Naive thymus-derived CD4-positive, alpha-beta T cell (primary cell): ENCODE measurements at regions of chr9 and their contacts with region 1.

Region 1: GRCh38 chr9:77177161-77177893 is at the start of gene VPS13A:
- DNase-seq: peak; percentile 78 to 92 (median 87)
- ATAC-seq: peak; percentile 92
- H3K4me3 ChIP-seq: peak within 1 kb of the TSS; percentile 89
- H3K4me3 Mint-ChIP-seq: peak within 1 kb of the TSS; percentile 90 to 98 (median 96)
- H3K27ac ChIP-seq: peak within 1 kb of the TSS; percentile 86
- H3K27ac Mint-ChIP-seq: peak within 1 kb of the TSS; percentile 76 to 96 (median 90)
- H3K4me1 ChIP-seq: peaks cover 5 to 17% of the 10 kb centered on the region in 2 donors
- H3K4me1 Mint-ChIP-seq: peaks cover 12 to 39% (median 30%) of the 10 kb centered on the region in 7 donors
- H3K27me3 ChIP-seq: no peaks in the 10 kb centered on the region
- H3K27me3 Mint-ChIP-seq: peaks cover 0 to 20% (median 0%) of the 10 kb centered on the region in 5 donors
- total RNA-seq, gene VPS13A: 37.1 to 52.8 (median 42.6) TPM

Region 2: DNA sequence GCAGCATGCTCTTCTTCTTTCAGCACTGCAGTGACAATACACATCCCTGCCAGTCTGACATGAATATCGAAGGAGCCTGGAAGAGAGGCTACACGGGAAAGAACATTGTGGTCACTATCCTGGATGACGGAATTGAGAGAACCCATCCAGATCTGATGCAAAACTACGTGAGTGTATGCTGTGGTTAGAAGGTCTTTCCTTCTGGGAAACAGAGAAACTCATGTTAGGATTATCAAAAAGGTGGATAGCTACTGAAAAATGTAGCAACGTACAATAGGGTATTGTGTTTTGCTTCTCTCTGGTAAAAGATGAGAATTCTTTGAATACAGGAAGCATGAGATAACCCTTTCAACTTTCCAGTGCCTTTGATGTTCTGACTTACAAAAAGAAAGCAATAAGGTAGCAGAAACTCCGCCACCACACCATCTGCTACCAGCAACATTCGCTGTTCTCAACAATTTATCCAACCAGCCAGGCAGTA is 1153.6 kb before region 1 on chr9:
- CTCF ChIA-PET with region 1: no interaction called
- POLR2A ChIA-PET with region 1: no interaction called
- intact Hi-C with region 1: loop called (anchors 5 kb)
- DNase-seq: peak in 7 of 9 donors; percentile 69 to 87 (median 81)
- ATAC-seq: peak; percentile 93
- H3K4me3 ChIP-seq: peak overlapping the region; percentile 38
- H3K4me3 Mint-ChIP-seq: peak overlapping the region; percentile 68 to 86 (median 80)
- H3K27ac ChIP-seq: peak overlapping the region; percentile 76
- H3K27ac Mint-ChIP-seq: peak overlapping the region; percentile 77 to 99 (median 96)
- H3K4me1 ChIP-seq: peaks cover 10 to 96% of the 10 kb centered on the region in 2 donors
- H3K4me1 Mint-ChIP-seq: peaks cover 59 to 100% (median 98%) of the 10 kb centered on the region in 7 donors
- H3K27me3 ChIP-seq: no peaks in the 10 kb centered on the region
- H3K27me3 Mint-ChIP-seq: no peaks in the 10 kb centered on the region

Region 3: DNA sequence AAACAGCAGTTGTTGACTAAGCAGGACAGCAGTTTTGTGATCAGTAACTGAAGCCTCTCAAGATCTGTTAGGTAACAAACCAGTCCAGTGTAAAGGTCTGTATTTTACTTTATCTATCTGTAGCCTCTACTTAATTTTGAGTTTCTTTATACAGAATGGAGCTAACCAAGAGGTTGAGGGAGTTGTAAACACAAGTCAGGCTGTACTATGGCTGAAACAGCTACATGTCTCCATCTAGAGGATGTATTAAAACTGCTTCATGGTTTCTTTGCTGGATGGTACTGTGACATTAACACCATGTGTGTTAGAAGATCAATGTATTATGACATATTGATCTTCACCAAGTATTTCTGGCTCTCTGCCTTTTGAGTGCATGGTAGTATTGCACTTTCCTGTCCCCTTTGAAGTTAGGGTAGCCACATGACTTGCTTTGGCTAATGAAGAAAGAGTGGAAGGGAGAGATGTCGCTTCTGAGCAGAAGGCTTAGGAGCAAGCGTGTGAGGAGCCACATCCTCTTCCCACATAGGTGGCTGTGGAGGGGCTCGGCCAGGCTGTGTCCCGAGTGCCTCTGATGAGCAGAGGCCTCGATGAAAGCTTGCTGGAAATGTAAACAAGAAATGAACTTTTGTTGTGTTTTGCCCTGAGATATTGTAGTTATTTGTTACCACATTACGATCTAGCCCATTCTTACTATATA is 518.6 kb before region 1 on chr9:
- CTCF ChIA-PET with region 1: no interaction called
- POLR2A ChIA-PET with region 1: no interaction called
- intact Hi-C with region 1: loop called in 1 of 2 experiments (anchors 10 kb)
- DNase-seq: peak in 4 of 9 donors; percentile 21 to 44 (median 25)
- ATAC-seq: peak; percentile 86
- H3K4me3 ChIP-seq: no peak overlapping the region
- H3K4me3 Mint-ChIP-seq: no peak overlapping the region
- H3K27ac ChIP-seq: no peak overlapping the region
- H3K27ac Mint-ChIP-seq: no peak overlapping the region
- H3K4me1 ChIP-seq: peaks cover 0 to 13% of the 10 kb centered on the region in 2 donors
- H3K4me1 Mint-ChIP-seq: peaks cover 0 to 52% (median 12%) of the 10 kb centered on the region in 7 donors
- H3K27me3 ChIP-seq: no peaks in the 10 kb centered on the region
- H3K27me3 Mint-ChIP-seq: peaks cover 0 to 18% (median 0%) of the 10 kb centered on the region in 5 donors

Region 4: GRCh38 chr9:77328102-77328501 is 150.8 kb after region 1 on chr9:
- CTCF ChIA-PET with region 1: no interaction called
- POLR2A ChIA-PET with region 1: no interaction called
- intact Hi-C with region 1: loop called in 1 of 2 experiments (anchors 10 kb)
- DNase-seq: no peak
- ATAC-seq: no peak
- H3K4me3 ChIP-seq: no peak overlapping the region
- H3K4me3 Mint-ChIP-seq: no peak overlapping the region
- H3K27ac ChIP-seq: no peak overlapping the region
- H3K27ac Mint-ChIP-seq: no peak overlapping the region
- H3K4me1 ChIP-seq: no peaks in the 10 kb centered on the region
- H3K4me1 Mint-ChIP-seq: peaks cover 0 to 5% (median 0%) of the 10 kb centered on the region in 7 donors
- H3K27me3 ChIP-seq: no peaks in the 10 kb centered on the region
- H3K27me3 Mint-ChIP-seq: no peaks in the 10 kb centered on the region

Region 5: GRCh38 chr9:77475641-77476473 is 298.5 kb after region 1 on chr9:
- CTCF ChIA-PET with region 1: no interaction called
- POLR2A ChIA-PET with region 1: no interaction called
- intact Hi-C with region 1: loop called in 1 of 2 experiments (anchors 1 kb)
- DNase-seq: peak in 8 of 9 donors; percentile 24 to 64 (median 48)
- ATAC-seq: peak; percentile 96
- H3K4me3 ChIP-seq: peak overlapping the region; percentile 1
- H3K4me3 Mint-ChIP-seq: peak overlapping the region; percentile 13 to 74 (median 52)
- H3K27ac ChIP-seq: peak overlapping the region; percentile 64
- H3K27ac Mint-ChIP-seq: peak overlapping the region; percentile 90 to 97 (median 95)
- H3K4me1 ChIP-seq: peaks cover 0 to 19% of the 10 kb centered on the region in 2 donors
- H3K4me1 Mint-ChIP-seq: peaks cover 7 to 37% (median 29%) of the 10 kb centered on the region in 7 donors
- H3K27me3 ChIP-seq: no peaks in the 10 kb centered on the region
- H3K27me3 Mint-ChIP-seq: no peaks in the 10 kb centered on the region

Region 6: GRCh38 chr9:77556396-77556795 is 379.1 kb after region 1 on chr9:
- CTCF ChIA-PET with region 1: no interaction called
- POLR2A ChIA-PET with region 1: no interaction called
- intact Hi-C with region 1: no loop called
- DNase-seq: no peak
- ATAC-seq: no peak
- H3K4me3 ChIP-seq: no peak overlapping the region
- H3K4me3 Mint-ChIP-seq: no peak overlapping the region
- H3K27ac ChIP-seq: no peak overlapping the region
- H3K27ac Mint-ChIP-seq: no peak overlapping the region
- H3K4me1 ChIP-seq: no peaks in the 10 kb centered on the region
- H3K4me1 Mint-ChIP-seq: no peaks in the 10 kb centered on the region
- H3K27me3 ChIP-seq: no peaks in the 10 kb centered on the region
- H3K27me3 Mint-ChIP-seq: peaks cover 0 to 10% (median 4%) of the 10 kb centered on the region in 5 donors

Region 7: GRCh38 chr9:77743386-77743785 is 566.1 kb after region 1 on chr9:
- CTCF ChIA-PET with region 1: no interaction called
- POLR2A ChIA-PET with region 1: no interaction called
- intact Hi-C with region 1: no loop called
- DNase-seq: no peak
- ATAC-seq: no peak
- H3K4me3 ChIP-seq: no peak overlapping the region
- H3K4me3 Mint-ChIP-seq: no peak overlapping the region
- H3K27ac ChIP-seq: no peak overlapping the region
- H3K27ac Mint-ChIP-seq: peak overlapping the region in 1 of 9 donors; percentile 77
- H3K4me1 ChIP-seq: no peaks in the 10 kb centered on the region
- H3K4me1 Mint-ChIP-seq: peaks cover 12 to 57% (median 35%) of the 10 kb centered on the region in 7 donors
- H3K27me3 ChIP-seq: no peaks in the 10 kb centered on the region
- H3K27me3 Mint-ChIP-seq: no peaks in the 10 kb centered on the region

Region 8: GRCh38 chr9:78235756-78236538 is 1058.6 kb after region 1 on chr9 and contains the start of gene CEP78:
- CTCF ChIA-PET with region 1: no interaction called
- POLR2A ChIA-PET with region 1: no interaction called
- intact Hi-C with region 1: loop called (anchors 1 kb)
- DNase-seq: peak; percentile 67 to 88 (median 81)
- ATAC-seq: peak; percentile 96
- H3K4me3 ChIP-seq: peak within 1 kb of the TSS; percentile 86
- H3K4me3 Mint-ChIP-seq: peak within 1 kb of the TSS in 4 of 10 donors; percentile 74 to 98 (median 98)
- H3K27ac ChIP-seq: peak within 1 kb of the TSS; percentile 72
- H3K27ac Mint-ChIP-seq: peak within 1 kb of the TSS; percentile 91 to 98 (median 95)
- H3K4me1 ChIP-seq: peaks cover 5 to 12% of the 10 kb centered on the region in 2 donors
- H3K4me1 Mint-ChIP-seq: peaks cover 28 to 46% (median 40%) of the 10 kb centered on the region in 7 donors
- H3K27me3 ChIP-seq: no peaks in the 10 kb centered on the region
- H3K27me3 Mint-ChIP-seq: peaks cover 0 to 3% (median 0%) of the 10 kb centered on the region in 5 donors
- total RNA-seq, gene CEP78: 14.7 to 34.8 (median 23.1) TPM